Mammary epithelial cell (primary cell): ENCODE measurements at regions of chr5 and their contacts with region 1.

Region 1: DNA sequence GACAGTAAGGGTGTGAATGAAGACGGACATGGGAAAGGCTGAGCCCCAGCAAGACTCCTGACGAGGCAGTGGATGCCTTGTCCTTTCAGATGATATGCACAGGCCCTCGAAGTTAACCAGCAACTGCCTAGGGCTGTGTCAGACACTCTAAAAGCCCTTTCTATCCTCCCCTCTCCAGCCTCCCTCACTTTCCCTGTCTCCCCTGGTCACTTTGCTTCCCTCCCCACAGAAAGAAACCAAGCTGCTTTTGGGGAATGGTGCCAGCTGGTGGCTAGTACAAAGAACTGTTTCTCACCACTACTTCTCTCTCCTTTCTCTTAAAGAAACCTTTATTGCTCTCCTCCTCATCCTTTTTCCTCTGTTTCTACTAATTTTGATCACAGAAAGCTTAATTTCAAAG is 21.4 kb downstream of the LHFPL2 start:
- DNase-seq: no peak
- H3K4me3 ChIP-seq: no peak overlapping the region
- H3K27ac ChIP-seq: no peak overlapping the region
- H3K4me1 ChIP-seq: peaks cover 6% of the 10 kb centered on the region
- H3K27me3 ChIP-seq: no peaks in the 10 kb centered on the region
- CTCF ChIP-seq: peak; percentile 29 to 39

Region 2: GRCh38 chr5:78405829-78406750 is 221.1 kb before region 1 on chr5:
- CTCF ChIA-PET with region 1: no interaction called
- dilution Hi-C with region 1: no loop called
- in situ Hi-C with region 1: no loop called
- intact Hi-C with region 1: no loop called
- DNase-seq: peak; percentile 66
- H3K4me3 ChIP-seq: no peak overlapping the region
- H3K27ac ChIP-seq: peak overlapping the region; percentile 52
- H3K4me1 ChIP-seq: peaks cover 14% of the 10 kb centered on the region
- H3K27me3 ChIP-seq: no peaks in the 10 kb centered on the region
- CTCF ChIP-seq: no peak

Region 3: DNA sequence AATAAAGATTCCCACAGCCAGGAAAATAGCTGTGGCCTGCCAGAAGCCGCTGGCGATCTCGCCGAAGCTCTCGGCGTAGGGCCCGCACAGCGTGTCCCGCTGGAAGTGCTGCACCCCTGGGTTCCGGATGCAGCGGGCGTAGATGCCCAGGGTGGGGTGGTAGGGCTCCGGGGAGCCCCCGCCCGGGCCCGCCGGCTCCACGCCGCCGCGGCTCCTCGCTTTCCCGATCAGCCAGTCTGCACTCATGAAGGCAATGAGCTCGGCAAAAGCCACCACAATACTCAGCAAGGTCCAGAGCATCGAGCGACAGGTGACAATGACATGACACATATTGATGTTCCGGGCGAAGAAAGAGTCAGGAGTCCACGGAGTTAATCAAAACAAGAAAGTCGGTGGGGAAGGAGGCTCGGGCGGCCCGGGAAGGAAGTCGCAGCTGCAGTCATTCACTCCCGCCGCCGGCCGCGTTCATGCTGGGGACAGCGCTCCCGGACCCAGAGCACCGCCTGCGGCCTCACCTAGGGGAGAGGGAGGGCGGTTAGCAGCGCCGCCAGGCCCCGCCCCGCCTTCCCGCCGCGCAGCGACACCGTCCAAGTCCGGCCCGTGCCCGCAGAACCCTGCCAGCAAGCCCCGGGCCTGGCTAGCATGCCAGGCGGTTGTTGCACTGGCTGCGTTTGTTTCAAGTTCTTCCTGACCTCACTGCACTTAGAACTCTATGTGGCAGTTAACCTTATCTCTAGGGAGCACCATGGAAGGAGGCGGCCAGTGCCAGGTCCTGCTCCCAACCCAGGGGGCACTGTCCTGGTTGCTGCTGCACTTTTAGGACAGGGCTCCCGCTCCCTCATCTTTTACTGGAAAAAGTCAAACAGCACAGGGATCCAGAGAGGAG is 117.0 kb before region 1 on chr5:
- CTCF ChIA-PET with region 1: no interaction called
- dilution Hi-C with region 1: no loop called
- in situ Hi-C with region 1: no loop called
- intact Hi-C with region 1: no loop called
- DNase-seq: peak; percentile 43
- H3K4me3 ChIP-seq: peak overlapping the region in 2 of 3 experiments; percentile 10 to 20
- H3K27ac ChIP-seq: no peak overlapping the region
- H3K4me1 ChIP-seq: peaks cover 36% of the 10 kb centered on the region
- H3K27me3 ChIP-seq: no peaks in the 10 kb centered on the region
- CTCF ChIP-seq: peak; percentile 9

Region 4: GRCh38 chr5:78555870-78556269 is 71.3 kb before region 1 on chr5:
- CTCF ChIA-PET with region 1: no interaction called
- dilution Hi-C with region 1: loop called (anchors 5 kb)
- in situ Hi-C with region 1: no loop called
- intact Hi-C with region 1: no loop called
- DNase-seq: no peak
- H3K4me3 ChIP-seq: no peak overlapping the region
- H3K27ac ChIP-seq: no peak overlapping the region
- H3K4me1 ChIP-seq: peaks cover 16% of the 10 kb centered on the region
- H3K27me3 ChIP-seq: no peaks in the 10 kb centered on the region
- CTCF ChIP-seq: no peak

Region 5: GRCh38 chr5:78648359-78649210 is 21.4 kb after region 1 on chr5 and contains the start of gene LHFPL2:
- CTCF ChIA-PET with region 1: no interaction called
- dilution Hi-C with region 1: no loop called
- in situ Hi-C with region 1: no loop called
- intact Hi-C with region 1: no loop called
- DNase-seq: peak; percentile 64
- H3K4me3 ChIP-seq: peak within 1 kb of the TSS; percentile 84 to 95 (median 93)
- H3K27ac ChIP-seq: peak within 1 kb of the TSS; percentile 75
- H3K4me1 ChIP-seq: peaks cover 31% of the 10 kb centered on the region
- H3K27me3 ChIP-seq: no peaks in the 10 kb centered on the region
- CTCF ChIP-seq: no peak
- total RNA-seq, gene LHFPL2: 52.5 to 53.5 TPM